ENCODE measurements at regions of chr12 and their contacts with region 1.

Region 1: GRCh38 chr12:51941011-51941581 is 10.4 kb upstream of the ACVR1B start:
- DNase-seq: no peak
- ATAC-seq: peak; percentile 32; the same call in 1 of the 3 replicates
- H3K4me3 ChIP-seq: no peak overlapping the region
- H3K27ac ChIP-seq: no peak overlapping the region
- H3K4me1 ChIP-seq: peaks cover 15% of the 10 kb centered on the region
- H3K27me3 ChIP-seq: peaks cover 1 to 38% of the 10 kb centered on the region in 2 experiments; a peak in 4 of 5 replicates
- CTCF ChIP-seq: no peak
- EP300 ChIP-seq: no peak
- POLR2A ChIP-seq: no peak
- RAD21 ChIP-seq: no peak

Region 2: DNA sequence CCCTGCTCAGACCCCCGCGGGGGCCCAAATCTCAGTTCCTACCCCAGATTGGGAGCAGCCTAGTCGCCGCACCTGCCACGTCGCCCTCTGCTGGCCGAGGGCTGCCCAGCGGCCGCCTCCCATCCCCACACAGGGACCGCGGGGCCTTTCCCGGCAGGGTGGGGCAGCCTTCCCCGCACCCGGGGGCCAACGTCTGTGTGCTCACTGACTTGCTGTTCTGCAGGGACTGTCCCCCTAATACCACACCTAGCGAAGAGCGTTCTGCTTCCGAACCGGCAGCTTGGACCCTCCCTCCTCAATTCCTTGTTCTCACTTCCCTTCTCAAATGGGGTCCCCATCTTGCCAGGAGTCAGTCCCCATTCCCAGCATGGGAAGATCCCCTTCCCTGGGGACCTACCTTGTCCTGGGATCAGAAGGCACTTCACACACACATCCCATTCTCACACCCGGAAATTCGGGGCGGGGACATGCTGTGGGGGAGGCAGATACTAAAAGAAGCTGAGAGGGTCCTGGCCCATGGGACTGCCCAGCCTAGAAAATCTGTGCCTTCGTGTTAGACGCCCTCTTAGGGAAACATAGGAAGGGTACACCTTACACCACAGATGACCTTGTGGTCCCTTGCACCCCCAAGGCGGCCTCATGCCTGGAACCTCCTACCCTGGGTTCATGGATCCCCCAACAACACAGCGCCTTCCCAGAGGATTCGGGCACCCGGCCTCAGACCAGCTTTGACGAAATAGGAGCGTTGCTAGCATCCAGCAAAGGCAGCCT is 17.4 kb before region 1 on chr12:
- CTCF ChIA-PET with region 1: no interaction called
- POLR2A ChIA-PET with region 1: no interaction called
- in situ Hi-C with region 1: no loop called
- intact Hi-C with region 1: no loop called
- DNase-seq: no peak
- ATAC-seq: peak; percentile 85
- H3K4me3 ChIP-seq: peak overlapping the region in 2 of 3 experiments; percentile 8 to 56; a peak in 2 of 6 replicates
- H3K27ac ChIP-seq: no peak overlapping the region
- H3K4me1 ChIP-seq: peaks cover 37% of the 10 kb centered on the region
- H3K27me3 ChIP-seq: peaks cover 1 to 14% of the 10 kb centered on the region in 2 experiments; a peak in 4 of 5 replicates
- CTCF ChIP-seq: peak; percentile 86
- EP300 ChIP-seq: no peak
- POLR2A ChIP-seq: no peak
- RAD21 ChIP-seq: peak; percentile 50; the same call in 1 of the 2 replicates

Region 3: GRCh38 chr12:52351196-52352059 is 410.3 kb after region 1 on chr12:
- CTCF ChIA-PET with region 1: no interaction called
- POLR2A ChIA-PET with region 1: no interaction called
- in situ Hi-C with region 1: no loop called
- intact Hi-C with region 1: loop called (anchors 5 kb)
- DNase-seq: no peak
- ATAC-seq: no peak
- H3K4me3 ChIP-seq: no peak overlapping the region
- H3K27ac ChIP-seq: no peak overlapping the region
- H3K4me1 ChIP-seq: peaks cover 9% of the 10 kb centered on the region
- H3K27me3 ChIP-seq: peaks cover 0 to 32% of the 10 kb centered on the region in 2 experiments; a peak in 4 of 5 replicates
- CTCF ChIP-seq: no peak
- EP300 ChIP-seq: no peak
- POLR2A ChIP-seq: no peak
- RAD21 ChIP-seq: no peak